Aorta (tissue), 5 donors: ENCODE measurements at regions of chr2 and their contacts with region 1.

Region 1: GRCh38 chr2:16392647-16393499 is 272.8 kb downstream of the CYRIA start:
- DNase-seq: no peak
- ATAC-seq: no peak
- H3K4me3 ChIP-seq: no peak overlapping the region
- H3K27ac ChIP-seq: no peak overlapping the region
- H3K4me1 ChIP-seq: no peaks in the 10 kb centered on the region
- H3K27me3 ChIP-seq: no peaks in the 10 kb centered on the region

Region 2: DNA sequence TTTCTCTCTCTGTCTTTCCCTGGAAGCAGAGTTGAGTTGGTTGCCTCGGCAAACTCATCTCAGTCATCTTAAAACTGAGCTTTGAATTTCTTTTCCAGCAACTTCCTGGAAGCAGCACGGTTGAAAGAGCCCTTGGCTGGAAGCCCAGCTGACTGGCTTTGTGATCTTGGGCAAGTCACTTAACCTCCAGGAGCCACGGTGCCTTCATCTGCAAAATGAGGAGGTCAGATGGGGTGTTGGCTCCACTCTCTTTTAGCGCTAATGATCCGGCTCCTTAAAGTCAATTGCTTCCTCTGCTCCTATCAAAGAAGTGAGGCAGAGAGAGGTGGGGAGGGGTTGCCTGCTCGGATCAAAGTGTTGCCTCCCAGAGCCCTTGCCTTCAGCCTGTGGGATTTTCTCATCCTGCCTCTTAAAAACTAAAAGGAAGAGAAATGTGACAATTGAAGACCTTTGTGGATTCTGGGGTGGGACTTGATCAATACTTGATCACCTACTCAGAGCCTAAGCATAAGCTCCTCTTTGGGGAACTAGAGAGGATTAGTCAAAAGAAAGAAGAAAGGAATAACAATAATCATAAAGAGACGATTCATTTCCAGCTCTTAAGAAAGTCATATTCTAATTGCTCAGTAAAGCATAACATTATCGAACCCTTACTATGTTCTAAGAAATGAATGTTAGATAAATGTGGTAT is 365.9 kb before region 1 on chr2:
- intact Hi-C with region 1: loop called in 1 of 2 experiments (anchors 2 kb)
- DNase-seq: no peak
- ATAC-seq: no peak
- H3K4me3 ChIP-seq: no peak overlapping the region
- H3K27ac ChIP-seq: no peak overlapping the region
- H3K4me1 ChIP-seq: no peaks in the 10 kb centered on the region
- H3K27me3 ChIP-seq: no peaks in the 10 kb centered on the region

Region 3: GRCh38 chr2:16293398-16293797 is 99.5 kb before region 1 on chr2:
- intact Hi-C with region 1: no loop called
- DNase-seq: no peak
- ATAC-seq: no peak
- H3K4me3 ChIP-seq: no peak overlapping the region
- H3K27ac ChIP-seq: no peak overlapping the region
- H3K4me1 ChIP-seq: no peaks in the 10 kb centered on the region
- H3K27me3 ChIP-seq: no peaks in the 10 kb centered on the region